Endothelial cell of umbilical vein (primary cell): ENCODE measurements at regions of chr2 and their contacts with region 1.

Region 1: GRCh38 chr2:9205963-9206948 is at the start of gene ASAP2:
- DNase-seq: peak; percentile 70
- H3K4me3 ChIP-seq: peak within 1 kb of the TSS; percentile 61 to 91 (median 72)
- H3K27ac ChIP-seq: peak within 1 kb of the TSS; percentile 81
- H3K4me1 ChIP-seq: peaks cover 31% of the 10 kb centered on the region
- H3K27me3 ChIP-seq: no peaks in the 10 kb centered on the region
- CTCF ChIP-seq: peak; percentile 86
- POLR2A ChIP-seq: peak; percentile 46
- total RNA-seq, gene ASAP2: 75.8 and 79.2 TPM in 2 replicates

Region 2: DNA sequence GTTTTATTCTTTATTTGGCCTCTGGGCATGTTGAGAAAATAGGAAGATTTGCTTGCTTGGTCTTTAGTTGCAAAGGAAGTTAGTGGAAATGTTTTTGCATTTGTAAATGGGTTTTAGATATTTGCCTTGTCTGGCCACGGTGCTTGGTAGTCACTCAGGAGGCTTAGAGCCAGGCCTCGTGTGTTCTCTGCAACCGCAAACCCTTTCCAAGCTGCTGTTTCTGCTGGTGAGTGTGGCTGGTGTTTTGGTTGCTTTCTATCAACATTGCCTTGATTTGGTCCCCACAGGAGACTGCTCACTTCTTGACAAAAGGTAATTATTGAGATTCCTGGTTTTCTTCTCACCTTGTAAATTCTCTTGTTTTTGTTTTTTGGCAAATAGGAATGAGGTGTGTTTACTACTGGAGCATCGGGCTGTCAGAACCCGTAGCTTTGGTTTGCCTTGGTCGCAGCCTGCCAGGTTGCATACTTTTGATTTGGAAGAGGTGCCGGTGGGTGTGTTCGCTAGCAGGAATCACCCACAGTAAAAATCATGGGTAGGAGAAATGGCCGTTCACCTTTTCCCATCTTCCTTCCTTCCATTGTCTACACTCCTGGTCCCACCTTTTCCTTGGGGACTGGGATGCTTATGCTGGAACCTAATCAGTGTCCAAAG is 16.1 kb after region 1 on chr2:
- CTCF ChIA-PET with region 1: interaction called, 38 read pairs
- POLR2A ChIA-PET with region 1: interaction called, 5 read pairs
- dilution Hi-C with region 1: no loop called
- intact Hi-C with region 1: loop called (anchors 1 kb)
- DNase-seq: no peak
- H3K4me3 ChIP-seq: no peak overlapping the region
- H3K27ac ChIP-seq: no peak overlapping the region
- H3K4me1 ChIP-seq: peaks cover 60% of the 10 kb centered on the region
- H3K27me3 ChIP-seq: no peaks in the 10 kb centered on the region
- CTCF ChIP-seq: no peak
- POLR2A ChIP-seq: no peak

Region 3: DNA sequence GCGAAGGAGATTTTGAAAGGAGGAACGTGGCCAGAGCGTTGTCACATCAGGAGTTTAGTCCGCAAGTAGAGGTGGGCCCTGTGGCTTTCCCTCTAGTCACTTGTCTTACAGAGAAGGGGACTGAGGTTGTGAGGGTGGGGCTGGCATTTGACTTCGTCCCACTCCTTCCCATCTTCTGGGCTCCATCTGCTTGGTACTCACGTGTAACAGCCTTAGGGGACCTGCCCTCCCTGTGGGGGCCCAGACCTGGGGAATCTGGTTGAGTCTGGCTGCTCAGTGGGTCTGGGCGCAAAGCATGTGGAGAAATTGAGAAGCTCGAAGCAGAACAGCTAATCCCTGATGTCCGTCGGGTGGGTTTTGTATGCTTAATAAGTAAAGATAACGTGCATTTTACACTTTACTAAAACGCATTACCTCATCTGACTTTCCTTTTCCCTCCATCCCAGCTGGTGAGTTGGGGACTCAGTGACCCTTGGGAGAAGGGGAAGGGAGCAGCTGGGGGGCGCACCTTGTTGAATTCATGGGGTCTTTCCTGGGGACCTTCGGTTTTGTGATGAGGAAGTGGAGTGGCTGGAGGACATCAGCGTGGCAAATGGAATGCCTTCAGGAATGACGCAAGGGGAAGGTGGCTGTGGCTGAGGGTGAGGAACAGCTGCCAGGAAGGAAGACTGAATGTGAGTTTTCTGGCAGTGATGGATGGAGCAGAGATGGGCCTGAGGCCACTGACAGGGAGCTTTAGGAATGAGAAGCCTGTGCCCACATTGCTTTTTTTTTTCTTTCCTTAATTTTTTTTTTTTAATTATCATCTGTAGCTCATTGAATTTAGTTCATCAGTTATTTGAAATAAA is 45.1 kb after region 1 on chr2:
- CTCF ChIA-PET with region 1: interaction called, 4 read pairs
- POLR2A ChIA-PET with region 1: interaction called, 6 read pairs
- dilution Hi-C with region 1: no loop called
- intact Hi-C with region 1: loop called (anchors 1 kb)
- DNase-seq: peak; percentile 81
- H3K4me3 ChIP-seq: no peak overlapping the region
- H3K27ac ChIP-seq: peak overlapping the region; percentile 94
- H3K4me1 ChIP-seq: peaks cover 61% of the 10 kb centered on the region
- H3K27me3 ChIP-seq: no peaks in the 10 kb centered on the region
- CTCF ChIP-seq: no peak
- POLR2A ChIP-seq: peak; percentile 10

Region 4: GRCh38 chr2:9287400-9288043 is 81.3 kb after region 1 on chr2:
- CTCF ChIA-PET with region 1: interaction called, 14 read pairs
- POLR2A ChIA-PET with region 1: interaction called, 4 read pairs
- dilution Hi-C with region 1: no loop called
- intact Hi-C with region 1: loop called (anchors 1 kb)
- DNase-seq: peak; percentile 93
- H3K4me3 ChIP-seq: no peak overlapping the region
- H3K27ac ChIP-seq: peak overlapping the region; percentile 86
- H3K4me1 ChIP-seq: peaks cover 39% of the 10 kb centered on the region
- H3K27me3 ChIP-seq: no peaks in the 10 kb centered on the region
- CTCF ChIP-seq: peak in 1 of 2 donors; percentile 33
- POLR2A ChIP-seq: peak; percentile 76

Region 5: DNA sequence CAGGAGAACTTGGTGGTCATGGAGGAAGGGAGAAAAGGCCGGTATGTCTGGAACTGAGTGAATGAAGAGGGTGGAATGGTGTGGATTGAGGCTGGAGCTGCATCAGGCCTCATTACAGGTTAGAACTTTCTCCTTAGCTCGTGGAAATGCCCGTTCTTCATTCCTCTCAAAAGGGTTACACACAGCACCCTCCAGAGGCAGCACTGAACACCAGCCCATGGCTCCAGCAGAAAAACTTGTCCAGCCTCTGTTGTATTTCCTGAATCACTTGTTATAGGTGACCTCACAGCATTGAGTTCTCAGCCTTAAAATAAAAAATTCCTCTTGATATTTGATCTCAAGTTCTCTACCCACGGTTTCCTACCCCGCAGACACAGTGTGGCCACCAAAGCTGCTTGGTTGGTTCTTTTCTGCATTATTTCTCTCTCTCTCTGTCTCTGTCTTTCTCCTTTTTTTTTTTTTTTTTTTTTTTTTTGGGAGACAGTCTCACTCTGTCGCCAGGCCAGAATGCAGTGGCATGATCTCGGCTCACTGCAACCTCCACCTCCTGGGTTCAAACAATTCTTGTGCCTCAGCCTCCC is 127.4 kb after region 1 on chr2:
- CTCF ChIA-PET with region 1: interaction called, 57 read pairs
- POLR2A ChIA-PET with region 1: no interaction called
- dilution Hi-C with region 1: no loop called
- intact Hi-C with region 1: loop called (anchors 1 kb)
- DNase-seq: peak; percentile 84
- H3K4me3 ChIP-seq: no peak overlapping the region
- H3K27ac ChIP-seq: peak overlapping the region; percentile 18
- H3K4me1 ChIP-seq: peaks cover 10% of the 10 kb centered on the region
- H3K27me3 ChIP-seq: no peaks in the 10 kb centered on the region
- CTCF ChIP-seq: peak; percentile 63 to 75
- POLR2A ChIP-seq: no peak